Heart left ventricle (tissue), 16 donors: ENCODE measurements at regions of chr12 and their contacts with region 1.

Region 1: DNA sequence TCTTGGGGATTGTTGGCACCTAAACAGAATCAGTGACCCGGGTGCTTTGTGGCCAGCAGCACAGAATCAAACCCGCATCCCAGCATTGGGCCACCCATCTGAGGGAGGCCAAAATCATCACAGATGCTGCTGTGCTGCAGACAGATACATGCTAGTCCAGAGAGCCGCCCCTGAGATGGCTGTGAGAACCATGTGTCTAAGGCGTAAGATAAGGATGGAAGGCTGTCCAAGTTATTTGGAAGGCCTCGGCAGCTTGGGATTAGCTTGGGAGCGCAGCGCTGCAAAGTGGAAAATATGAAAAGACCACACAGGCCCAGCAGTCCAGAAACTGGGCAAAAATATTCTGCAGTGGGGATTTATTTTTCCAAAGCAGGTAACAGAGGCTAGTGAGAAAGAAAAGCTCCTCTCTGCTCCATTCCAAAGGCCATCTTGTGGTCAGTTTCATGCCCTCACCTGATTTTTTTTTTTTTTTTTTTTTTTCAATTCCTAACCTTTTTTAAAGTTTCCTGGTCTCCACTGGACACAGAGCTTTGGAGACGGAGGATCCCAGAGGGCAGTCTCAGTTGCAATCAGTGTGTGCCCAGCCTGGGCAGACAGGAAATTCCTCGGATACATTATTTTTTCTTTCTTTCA is 178.9 kb upstream of the BCL2L14 start:
- DNase-seq: peak; percentile 34 to 72 (median 60)
- ATAC-seq: peak; percentile 66 to 89 (median 83)
- H3K4me3 ChIP-seq: no peak overlapping the region
- H3K27ac ChIP-seq: peak overlapping the region in 6 of 12 donors; percentile 2 to 57 (median 40)
- H3K4me1 ChIP-seq: peaks cover 0 to 23% (median 10%) of the 10 kb centered on the region in 12 donors
- H3K27me3 ChIP-seq: no peaks in the 10 kb centered on the region
- CTCF ChIP-seq: peak in 11 of 12 donors; percentile 13 to 54 (median 35)
- POLR2A ChIP-seq: no peak

Region 2: DNA sequence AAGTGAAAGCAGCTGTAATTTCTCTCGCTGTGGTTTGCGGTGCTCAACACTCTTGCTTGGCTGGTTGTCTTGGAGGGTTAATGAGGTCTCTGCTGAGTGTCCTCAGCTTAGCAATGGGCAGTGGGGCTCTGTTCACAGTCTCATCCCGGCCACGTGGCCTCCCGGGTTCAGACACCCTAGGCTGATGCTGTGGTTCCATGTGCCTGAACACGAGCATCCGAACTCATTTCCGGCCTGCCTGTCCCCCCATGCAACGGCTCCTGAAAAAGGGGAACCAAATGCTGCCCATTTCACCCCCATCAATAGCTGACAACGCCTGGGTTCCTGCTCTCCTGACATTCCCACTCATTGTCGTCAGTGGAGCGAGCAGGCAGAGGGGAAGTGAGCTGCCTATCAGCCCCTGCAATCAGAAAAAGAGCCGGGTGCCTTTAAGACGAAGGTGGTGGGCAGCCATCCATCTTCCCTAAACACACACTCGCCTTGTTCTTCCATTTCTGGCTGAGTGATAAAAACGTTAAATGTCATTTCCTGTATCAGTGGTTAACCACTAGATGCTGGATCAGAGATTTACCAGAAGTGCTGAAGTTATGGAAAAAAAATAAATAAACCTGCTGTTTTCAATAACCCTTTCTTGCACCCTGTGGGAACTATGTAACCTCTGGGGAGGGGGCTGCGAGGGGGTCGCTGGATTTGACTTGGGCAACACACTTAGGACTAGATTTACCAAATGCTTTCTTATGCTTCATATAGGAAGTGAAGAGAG is 118.6 kb after region 1 on chr12:
- intact Hi-C with region 1: loop called in 1 of 10 experiments (anchors 10 kb)
- DNase-seq: peak; percentile 65 to 80 (median 69)
- ATAC-seq: peak; percentile 66 to 88 (median 76)
- H3K4me3 ChIP-seq: peak overlapping the region in 9 of 12 donors; percentile 9 to 36 (median 19)
- H3K27ac ChIP-seq: peak overlapping the region in 7 of 12 donors; percentile 5 to 92 (median 47)
- H3K4me1 ChIP-seq: peaks cover 0 to 55% (median 2%) of the 10 kb centered on the region in 12 donors
- H3K27me3 ChIP-seq: no peaks in the 10 kb centered on the region
- CTCF ChIP-seq: no peak
- POLR2A ChIP-seq: no peak

Region 3: DNA sequence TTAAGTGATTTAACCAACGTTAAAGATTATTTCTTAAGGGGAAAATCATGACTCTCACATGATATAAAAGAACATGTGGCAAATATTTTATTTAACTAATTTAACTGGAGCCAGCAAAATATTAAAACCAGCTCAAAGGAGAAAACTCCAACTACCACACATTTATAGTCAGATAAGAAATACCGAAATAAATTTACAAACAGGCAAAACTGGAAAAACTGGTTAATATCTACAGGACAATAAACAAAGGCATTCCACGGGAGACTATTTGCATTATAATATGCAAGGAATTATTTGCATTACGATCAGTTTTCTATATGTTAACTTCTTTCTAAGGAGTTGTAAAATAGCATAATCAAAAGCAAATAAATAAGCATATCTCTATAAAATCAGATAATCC is 165.1 kb after region 1 on chr12:
- intact Hi-C with region 1: no loop called
- DNase-seq: no peak
- ATAC-seq: no peak
- H3K4me3 ChIP-seq: no peak overlapping the region
- H3K27ac ChIP-seq: no peak overlapping the region
- H3K4me1 ChIP-seq: no peaks in the 10 kb centered on the region
- H3K27me3 ChIP-seq: no peaks in the 10 kb centered on the region
- CTCF ChIP-seq: no peak
- POLR2A ChIP-seq: no peak